RWPE1 (cell line): ENCODE measurements at regions of chr18 and their contacts with region 1.

Region 1: DNA sequence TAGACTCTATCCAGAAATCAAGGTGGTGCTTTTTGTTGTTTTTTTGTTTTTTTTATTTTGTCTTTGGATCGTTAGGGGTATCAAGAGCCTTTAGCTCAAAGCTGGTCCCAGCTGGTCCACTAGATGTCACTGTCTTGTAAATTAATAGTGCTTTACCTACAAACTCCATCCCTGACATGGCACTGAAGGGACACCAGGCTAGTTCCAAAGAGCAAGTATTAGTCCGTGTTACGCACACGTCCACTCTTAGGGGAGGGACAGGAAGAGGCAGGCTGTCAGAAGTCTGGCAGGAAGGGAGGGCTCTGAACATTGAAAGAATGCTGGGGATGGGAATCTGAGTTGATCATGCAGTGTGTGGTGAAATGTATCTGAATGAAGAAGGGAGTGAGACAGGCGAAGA is 85.9 kb upstream of the CCBE1 start:
- DNase-seq: no peak
- H3K27ac ChIP-seq: no peak overlapping the region
- CTCF ChIP-seq: peak; percentile 60

Region 2: DNA sequence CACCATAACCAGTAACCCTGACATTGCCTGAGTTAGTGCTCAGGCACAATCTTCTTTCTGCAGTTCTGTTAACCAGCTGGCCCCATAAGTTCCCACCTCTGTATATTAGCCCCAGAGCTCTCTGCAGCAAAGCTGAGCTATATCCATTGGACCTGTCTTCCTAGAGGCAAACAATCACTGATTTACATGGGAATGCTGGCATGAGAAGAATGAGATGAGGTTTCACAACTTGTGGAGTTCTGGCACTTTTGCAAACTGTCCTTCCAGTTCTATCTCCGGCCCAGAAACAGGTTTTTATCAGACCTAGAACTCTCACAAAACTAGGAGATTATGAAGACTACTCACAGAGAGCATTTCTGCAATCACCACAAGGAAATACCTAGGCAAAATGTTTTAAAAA is 78.0 kb before region 1 on chr18:
- CTCF ChIA-PET with region 1: no interaction called
- POLR2A ChIA-PET with region 1: no interaction called
- DNase-seq: no peak
- H3K27ac ChIP-seq: no peak overlapping the region
- CTCF ChIP-seq: no peak

Region 3: GRCh38 chr18:60446821-60447220 is 663.7 kb after region 1 on chr18:
- CTCF ChIA-PET with region 1: interaction called, 11 read pairs
- POLR2A ChIA-PET with region 1: no interaction called
- DNase-seq: no peak
- H3K27ac ChIP-seq: no peak overlapping the region
- CTCF ChIP-seq: no peak